ACHN (cell line): ENCODE measurements at regions of chr1 and their contacts with region 1.

Region 1: GRCh38 chr1:161374373-161374772 is 6.7 kb upstream of the CFAP126 start:
- DNase-seq: peak; percentile 22

Region 2: DNA sequence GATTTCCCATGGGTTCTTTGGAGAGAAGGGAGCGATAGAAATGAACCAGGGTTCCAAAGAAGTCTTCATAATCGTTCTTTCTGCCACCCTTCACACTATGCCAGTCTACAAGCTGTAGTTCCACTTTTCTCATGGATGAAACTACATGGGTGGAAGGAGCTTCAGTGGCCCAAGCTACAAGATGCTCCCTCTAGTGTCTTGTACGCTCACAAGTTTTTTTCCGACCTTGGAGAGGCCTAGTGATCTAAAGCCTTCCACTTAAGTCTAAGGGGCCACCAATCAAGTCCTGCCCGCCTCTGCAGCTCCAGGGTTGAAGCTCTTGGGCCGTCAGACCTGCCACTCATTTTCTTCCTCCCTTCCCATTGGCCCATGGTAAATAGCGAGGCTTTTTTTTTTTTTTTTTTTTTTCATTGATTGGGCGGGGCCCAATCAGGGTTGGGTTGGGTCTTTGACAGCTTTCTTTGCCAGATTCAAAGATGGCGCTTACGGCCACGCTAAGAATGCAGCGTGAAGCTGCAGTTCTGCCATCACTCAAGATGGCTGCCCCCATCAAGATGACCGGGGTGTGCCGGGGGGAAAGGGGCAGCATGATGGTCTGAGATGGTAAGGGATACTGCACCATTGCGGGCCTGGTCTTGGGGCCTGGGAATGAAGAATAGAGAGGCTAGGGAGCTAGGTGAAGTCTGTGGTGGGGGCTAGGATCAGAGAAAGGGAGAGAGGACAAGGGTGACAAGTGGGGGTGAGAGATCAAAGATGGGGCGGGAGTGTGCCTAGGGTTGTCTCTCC is 148.6 kb before region 1 on chr1 and contains the start of gene TOMM40L:
- in situ Hi-C with region 1: loop called (anchors 10 kb)
- DNase-seq: peak; percentile 99